CD8-positive, alpha-beta T cell (primary cell): ENCODE measurements at regions of chr16 and their contacts with region 1.

Region 1: DNA sequence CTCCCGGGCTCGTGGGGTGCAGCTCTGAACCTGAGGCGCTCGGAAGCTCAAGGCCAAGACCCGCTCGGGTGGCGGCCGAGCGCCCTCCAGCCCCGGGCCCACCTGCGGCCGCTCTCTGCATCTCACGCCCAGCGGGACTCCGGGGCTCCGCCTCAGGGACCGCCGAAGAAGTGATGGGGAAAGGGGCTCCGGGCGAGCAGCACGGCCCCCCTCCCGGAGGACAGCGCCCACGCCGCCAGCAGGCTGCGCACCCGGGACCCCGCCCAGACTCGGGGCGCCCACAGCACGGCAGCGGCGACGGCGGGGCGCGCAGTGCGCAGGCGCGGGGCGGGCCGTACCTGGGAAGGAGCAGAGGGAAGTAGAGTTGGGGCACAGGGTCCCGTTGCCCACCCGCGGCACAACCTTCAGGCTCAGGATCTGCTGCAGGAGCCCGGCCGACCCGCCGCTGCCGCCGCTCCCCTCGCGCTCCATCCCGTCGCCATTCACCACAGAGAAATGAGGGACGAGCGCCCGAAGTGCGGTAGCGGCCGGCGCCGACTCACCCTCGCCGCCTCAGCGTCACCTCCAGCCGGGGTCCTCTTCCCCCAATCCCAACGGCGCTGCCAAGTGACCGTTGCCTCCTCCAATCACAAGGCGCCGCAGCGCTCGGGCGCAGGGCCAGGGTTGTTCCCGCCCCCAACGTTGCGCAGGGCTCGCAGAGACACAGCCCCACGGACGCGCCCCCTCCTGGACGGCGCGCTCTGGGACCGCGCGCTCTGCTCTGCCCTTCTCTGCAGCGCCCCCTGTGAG is at the start of gene TMEM170A:
- DNase-seq: peak; percentile 97 to 99 (median 99)
- ATAC-seq: peak; percentile 89
- H3K4me3 ChIP-seq: peak within 1 kb of the TSS; percentile 92 to 99
- H3K4me3 Mint-ChIP-seq: peak within 1 kb of the TSS; percentile 94
- H3K27ac ChIP-seq: peak within 1 kb of the TSS; percentile 96 to 99
- H3K27ac Mint-ChIP-seq: peak within 1 kb of the TSS; percentile 97
- H3K4me1 ChIP-seq: peaks cover 31% of the 10 kb centered on the region
- H3K4me1 Mint-ChIP-seq: peaks cover 42% of the 10 kb centered on the region
- H3K27me3 ChIP-seq: no peaks in the 10 kb centered on the region
- H3K27me3 Mint-ChIP-seq: no peaks in the 10 kb centered on the region
- CTCF ChIP-seq: peak; percentile 100
- total RNA-seq, gene TMEM170A: 36.9 to 37.5 TPM

Region 2: GRCh38 chr16:74998481-74999218 is 465.7 kb before region 1 on chr16 and contains the start of gene ZNRF1:
- CTCF ChIA-PET with region 1: no interaction called
- POLR2A ChIA-PET with region 1: no interaction called
- intact Hi-C with region 1: loop called in 1 of 2 experiments (anchors 1 kb)
- DNase-seq: peak; percentile 61 to 89 (median 79)
- ATAC-seq: peak; percentile 82
- H3K4me3 ChIP-seq: peak within 1 kb of the TSS; percentile 58 to 79
- H3K4me3 Mint-ChIP-seq: peak within 1 kb of the TSS; percentile 90
- H3K27ac ChIP-seq: peak within 1 kb of the TSS in 1 of 2 experiments; percentile 37
- H3K27ac Mint-ChIP-seq: peak within 1 kb of the TSS; percentile 85
- H3K4me1 ChIP-seq: peaks cover 20% of the 10 kb centered on the region
- H3K4me1 Mint-ChIP-seq: peaks cover 15% of the 10 kb centered on the region
- H3K27me3 ChIP-seq: peaks cover 0 to 7% of the 10 kb centered on the region in 2 experiments
- H3K27me3 Mint-ChIP-seq: no peaks in the 10 kb centered on the region
- CTCF ChIP-seq: peak; percentile 60
- total RNA-seq, gene ZNRF1: 1.7 to 2.0 TPM

Region 3: DNA sequence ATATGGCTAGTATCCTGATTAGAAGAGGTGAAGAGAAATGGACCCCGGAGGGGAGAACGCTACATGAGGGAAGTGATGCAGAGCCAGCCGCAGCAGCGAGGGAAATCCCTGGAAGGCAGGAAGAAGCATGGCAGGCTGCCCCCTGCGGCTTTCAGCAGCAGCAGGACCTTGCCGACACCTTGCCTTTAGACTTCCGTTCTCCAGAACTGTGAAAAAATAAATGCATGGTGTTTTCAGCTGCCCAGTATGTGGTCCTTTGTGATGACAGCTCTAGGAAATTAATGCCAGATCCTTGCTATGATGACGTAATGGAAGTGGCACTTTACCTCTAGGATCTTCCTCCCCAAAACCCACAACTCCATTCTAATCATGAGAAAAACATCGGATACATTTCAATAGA is 325.7 kb before region 1 on chr16:
- CTCF ChIA-PET with region 1: no interaction called
- POLR2A ChIA-PET with region 1: no interaction called
- intact Hi-C with region 1: no loop called
- DNase-seq: peak in 2 of 9 experiments; percentile 16 to 38
- ATAC-seq: no peak
- H3K4me3 ChIP-seq: no peak overlapping the region
- H3K4me3 Mint-ChIP-seq: no peak overlapping the region
- H3K27ac ChIP-seq: no peak overlapping the region
- H3K27ac Mint-ChIP-seq: no peak overlapping the region
- H3K4me1 ChIP-seq: no peaks in the 10 kb centered on the region
- H3K4me1 Mint-ChIP-seq: peaks cover 4% of the 10 kb centered on the region
- H3K27me3 ChIP-seq: no peaks in the 10 kb centered on the region
- H3K27me3 Mint-ChIP-seq: no peaks in the 10 kb centered on the region
- CTCF ChIP-seq: no peak

Region 4: GRCh38 chr16:75198135-75198600 is 266.2 kb before region 1 on chr16:
- CTCF ChIA-PET with region 1: interaction called, 24 read pairs
- POLR2A ChIA-PET with region 1: no interaction called
- intact Hi-C with region 1: loop called in 1 of 2 experiments (anchors 1 kb)
- DNase-seq: no peak
- ATAC-seq: no peak
- H3K4me3 ChIP-seq: no peak overlapping the region
- H3K4me3 Mint-ChIP-seq: no peak overlapping the region
- H3K27ac ChIP-seq: no peak overlapping the region
- H3K27ac Mint-ChIP-seq: no peak overlapping the region
- H3K4me1 ChIP-seq: peaks cover 14% of the 10 kb centered on the region
- H3K4me1 Mint-ChIP-seq: peaks cover 18% of the 10 kb centered on the region
- H3K27me3 ChIP-seq: no peaks in the 10 kb centered on the region
- H3K27me3 Mint-ChIP-seq: peaks cover 25% of the 10 kb centered on the region
- CTCF ChIP-seq: no peak

Region 5: DNA sequence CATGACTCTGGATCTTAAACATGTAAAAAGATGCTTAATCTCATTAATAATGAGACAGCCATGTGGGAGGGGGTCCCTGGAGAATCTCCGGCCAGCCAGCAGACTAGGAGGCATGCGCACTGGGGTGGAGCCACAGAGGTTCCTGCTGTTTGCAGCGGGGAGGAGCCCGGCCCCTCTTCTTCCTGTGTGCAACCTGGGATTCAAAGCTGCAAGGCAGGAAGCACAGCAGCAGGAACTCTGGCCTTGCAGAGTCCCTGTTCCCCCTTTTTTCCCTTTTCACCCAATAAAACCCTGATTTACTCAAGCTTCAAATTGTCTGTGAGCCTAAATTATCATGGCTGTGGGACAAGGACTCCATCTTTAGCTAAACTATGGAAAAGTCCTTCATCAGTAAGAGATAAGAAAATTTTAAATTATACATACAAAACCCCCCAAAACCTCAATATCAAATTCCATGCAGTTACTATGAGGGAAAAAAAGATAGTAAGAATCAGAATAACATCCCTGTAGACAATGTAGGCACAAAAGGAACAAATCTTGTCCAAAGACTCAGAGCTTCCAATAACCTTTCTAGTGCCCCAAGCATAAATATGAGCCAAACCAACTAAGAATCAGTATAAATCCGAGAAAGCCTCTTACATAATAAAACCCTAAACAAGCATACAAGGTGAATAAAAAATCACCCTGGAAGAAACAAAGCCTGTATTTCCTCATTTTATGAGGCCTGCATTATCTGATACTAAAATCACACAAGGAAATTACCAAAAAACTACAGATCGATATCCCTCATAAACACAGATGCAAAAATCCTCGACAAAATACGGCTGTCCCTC is 43.1 kb before region 1 on chr16:
- CTCF ChIA-PET with region 1: interaction called, 3 read pairs
- POLR2A ChIA-PET with region 1: interaction called, 4 read pairs
- intact Hi-C with region 1: loop called in 1 of 2 experiments (anchors 5 kb)
- DNase-seq: peak in 5 of 9 experiments; percentile 16 to 39 (median 32)
- ATAC-seq: peak; percentile 58
- H3K4me3 ChIP-seq: no peak overlapping the region
- H3K4me3 Mint-ChIP-seq: peak overlapping the region; percentile 60
- H3K27ac ChIP-seq: no peak overlapping the region
- H3K27ac Mint-ChIP-seq: peak overlapping the region; percentile 46
- H3K4me1 ChIP-seq: peaks cover 18% of the 10 kb centered on the region
- H3K4me1 Mint-ChIP-seq: peaks cover 38% of the 10 kb centered on the region
- H3K27me3 ChIP-seq: no peaks in the 10 kb centered on the region
- H3K27me3 Mint-ChIP-seq: no peaks in the 10 kb centered on the region
- CTCF ChIP-seq: no peak

Region 6: GRCh38 chr16:75452464-75453190 is 11.7 kb before region 1 on chr16:
- CTCF ChIA-PET with region 1: interaction called, 13 read pairs
- POLR2A ChIA-PET with region 1: interaction called, 4 read pairs
- intact Hi-C with region 1: no loop called
- DNase-seq: no peak
- ATAC-seq: no peak
- H3K4me3 ChIP-seq: no peak overlapping the region
- H3K4me3 Mint-ChIP-seq: no peak overlapping the region
- H3K27ac ChIP-seq: no peak overlapping the region
- H3K27ac Mint-ChIP-seq: no peak overlapping the region
- H3K4me1 ChIP-seq: no peaks in the 10 kb centered on the region
- H3K4me1 Mint-ChIP-seq: peaks cover 47% of the 10 kb centered on the region
- H3K27me3 ChIP-seq: no peaks in the 10 kb centered on the region
- H3K27me3 Mint-ChIP-seq: no peaks in the 10 kb centered on the region
- CTCF ChIP-seq: no peak

Region 7: GRCh38 chr16:75555707-75556430 is 91.5 kb after region 1 on chr16 and contains the start of gene TMEM231:
- CTCF ChIA-PET with region 1: interaction called, 3 read pairs
- POLR2A ChIA-PET with region 1: interaction called, 3 read pairs
- intact Hi-C with region 1: loop called in 1 of 2 experiments (anchors 1 kb)
- DNase-seq: peak; percentile 95 to 98 (median 97)
- ATAC-seq: peak; percentile 96
- H3K4me3 ChIP-seq: peak within 1 kb of the TSS; percentile 61 to 69
- H3K4me3 Mint-ChIP-seq: peak within 1 kb of the TSS; percentile 86
- H3K27ac ChIP-seq: peak within 1 kb of the TSS; percentile 65 to 70
- H3K27ac Mint-ChIP-seq: peak within 1 kb of the TSS; percentile 88
- H3K4me1 ChIP-seq: peaks cover 12% of the 10 kb centered on the region
- H3K4me1 Mint-ChIP-seq: peaks cover 14% of the 10 kb centered on the region
- H3K27me3 ChIP-seq: no peaks in the 10 kb centered on the region
- H3K27me3 Mint-ChIP-seq: peaks cover 9% of the 10 kb centered on the region
- CTCF ChIP-seq: no peak
- total RNA-seq, gene TMEM231: 2.1 to 2.8 TPM

Region 8: DNA sequence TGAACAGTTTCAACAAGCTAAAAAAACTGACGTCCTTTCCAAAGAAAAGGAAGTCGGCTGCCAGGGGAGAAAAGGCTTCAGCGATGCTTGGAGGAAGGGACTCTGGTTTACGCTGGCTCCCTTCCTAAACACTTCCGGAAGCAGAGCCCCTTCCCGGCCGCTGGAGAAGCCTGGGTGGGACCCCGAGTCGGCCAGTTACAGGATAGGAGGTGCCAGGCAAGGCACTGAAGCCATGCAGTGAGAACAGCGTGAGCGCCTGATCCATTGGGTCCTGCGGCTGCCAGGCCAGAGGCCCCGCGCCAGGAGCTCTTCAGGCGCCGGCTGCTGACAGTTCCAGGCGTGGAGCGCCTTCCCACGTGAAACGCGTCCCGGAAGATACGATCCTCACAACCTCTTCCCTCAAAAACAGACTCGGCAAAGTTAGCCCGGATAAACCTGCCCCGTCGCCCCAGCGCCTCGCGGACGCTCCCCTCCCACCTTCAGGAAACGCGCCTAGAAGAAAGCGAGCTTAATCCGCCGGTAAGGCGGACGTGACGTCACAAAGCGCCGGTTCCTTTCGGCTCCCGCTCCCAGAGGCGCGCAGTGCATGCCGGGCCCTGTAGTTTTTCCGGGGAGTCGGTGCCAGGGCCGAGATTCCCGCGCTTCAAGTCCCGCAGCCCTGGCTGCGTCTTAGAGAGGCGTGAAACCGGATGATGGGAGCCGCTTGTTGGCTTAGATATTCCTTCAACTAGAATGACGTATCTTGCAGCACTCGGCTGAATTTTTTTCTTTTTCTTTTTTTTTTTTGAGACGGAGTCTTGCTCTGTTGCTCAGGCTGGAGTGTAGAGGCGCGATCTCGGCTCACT is 158.7 kb after region 1 on chr16 and contains the start of gene ADAT1:
- CTCF ChIA-PET with region 1: interaction called, 6 read pairs
- POLR2A ChIA-PET with region 1: interaction called, 4 read pairs
- intact Hi-C with region 1: loop called (anchors 1 kb)
- DNase-seq: peak; percentile 94 to 100 (median 98)
- ATAC-seq: peak; percentile 85
- H3K4me3 ChIP-seq: peak within 1 kb of the TSS; percentile 90 to 97
- H3K4me3 Mint-ChIP-seq: peak within 1 kb of the TSS; percentile 98
- H3K27ac ChIP-seq: peak within 1 kb of the TSS; percentile 89 to 98
- H3K27ac Mint-ChIP-seq: peak within 1 kb of the TSS; percentile 98
- H3K4me1 ChIP-seq: peaks cover 36% of the 10 kb centered on the region
- H3K4me1 Mint-ChIP-seq: peaks cover 58% of the 10 kb centered on the region
- H3K27me3 ChIP-seq: no peaks in the 10 kb centered on the region
- H3K27me3 Mint-ChIP-seq: no peaks in the 10 kb centered on the region
- CTCF ChIP-seq: no peak
- total RNA-seq, gene ADAT1: 44.4 to 47.6 TPM